Breast epithelium (tissue), 4 donors: ENCODE measurements at regions of chr7 and their contacts with region 1.

Region 1: DNA sequence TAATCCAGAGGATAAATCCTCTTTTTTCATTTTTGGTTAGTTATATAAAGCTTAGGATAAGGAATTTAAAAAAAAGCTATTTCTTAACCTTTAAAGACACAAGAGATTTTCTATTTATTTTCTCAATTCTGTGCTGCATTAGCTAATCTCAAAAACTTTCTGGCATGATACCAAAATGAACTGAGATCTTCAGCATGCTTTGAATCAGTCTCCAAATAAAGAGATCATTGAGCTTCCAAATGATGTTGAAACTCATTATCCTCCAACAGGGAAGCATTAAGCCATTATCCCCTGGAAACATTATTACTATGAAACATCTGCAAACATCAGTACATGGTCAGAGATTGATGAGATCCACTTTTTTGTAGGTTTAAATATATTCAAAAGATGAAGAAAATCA is 350.3 kb upstream of the TEX47 start:
- DNase-seq: no peak
- H3K4me3 ChIP-seq: no peak overlapping the region
- H3K27ac ChIP-seq: no peak overlapping the region
- H3K4me1 ChIP-seq: no peaks in the 10 kb centered on the region
- H3K27me3 ChIP-seq: no peaks in the 10 kb centered on the region
- CTCF ChIP-seq: no peak
- POLR2A ChIP-seq: no peak

Region 2: GRCh38 chr7:88789480-88790064 is 356.2 kb before region 1 on chr7:
- intact Hi-C with region 1: loop called (anchors 5 kb)
- DNase-seq: no peak
- H3K4me3 ChIP-seq: no peak overlapping the region
- H3K27ac ChIP-seq: no peak overlapping the region
- H3K4me1 ChIP-seq: no peaks in the 10 kb centered on the region
- H3K27me3 ChIP-seq: no peaks in the 10 kb centered on the region
- CTCF ChIP-seq: peak; percentile 34 to 62 (median 58)
- POLR2A ChIP-seq: no peak

Region 3: GRCh38 chr7:88985295-88985694 is 160.5 kb before region 1 on chr7:
- intact Hi-C with region 1: no loop called
- DNase-seq: no peak
- H3K4me3 ChIP-seq: no peak overlapping the region
- H3K27ac ChIP-seq: no peak overlapping the region
- H3K4me1 ChIP-seq: no peaks in the 10 kb centered on the region
- H3K27me3 ChIP-seq: no peaks in the 10 kb centered on the region
- CTCF ChIP-seq: no peak
- POLR2A ChIP-seq: no peak

Region 4: DNA sequence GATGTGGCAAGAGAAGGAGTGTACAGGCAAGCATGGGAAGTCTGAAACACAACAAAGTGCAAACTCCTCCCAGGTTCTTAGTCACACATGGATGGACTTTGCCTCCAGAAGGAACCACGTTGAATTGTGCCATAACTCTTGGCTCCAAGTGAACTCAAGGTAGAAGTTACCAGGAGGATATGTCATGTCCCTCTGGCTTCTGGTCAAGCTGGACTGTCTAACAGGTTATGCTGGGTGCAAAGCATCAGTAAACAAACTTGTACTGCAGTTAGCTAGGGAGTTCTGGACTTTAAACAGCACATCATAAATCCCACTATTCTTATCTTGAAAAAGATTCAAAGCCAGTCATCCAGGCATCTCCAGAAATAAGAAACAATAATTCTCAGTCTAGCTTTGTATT is 21.9 kb before region 1 on chr7:
- intact Hi-C with region 1: no loop called
- DNase-seq: no peak
- H3K4me3 ChIP-seq: no peak overlapping the region
- H3K27ac ChIP-seq: no peak overlapping the region
- H3K4me1 ChIP-seq: no peaks in the 10 kb centered on the region
- H3K27me3 ChIP-seq: no peaks in the 10 kb centered on the region
- CTCF ChIP-seq: no peak
- POLR2A ChIP-seq: no peak